Head of caudate nucleus (tissue), 42 donors: ENCODE measurements at regions of chr4 and their contacts with region 1.

Region 1: DNA sequence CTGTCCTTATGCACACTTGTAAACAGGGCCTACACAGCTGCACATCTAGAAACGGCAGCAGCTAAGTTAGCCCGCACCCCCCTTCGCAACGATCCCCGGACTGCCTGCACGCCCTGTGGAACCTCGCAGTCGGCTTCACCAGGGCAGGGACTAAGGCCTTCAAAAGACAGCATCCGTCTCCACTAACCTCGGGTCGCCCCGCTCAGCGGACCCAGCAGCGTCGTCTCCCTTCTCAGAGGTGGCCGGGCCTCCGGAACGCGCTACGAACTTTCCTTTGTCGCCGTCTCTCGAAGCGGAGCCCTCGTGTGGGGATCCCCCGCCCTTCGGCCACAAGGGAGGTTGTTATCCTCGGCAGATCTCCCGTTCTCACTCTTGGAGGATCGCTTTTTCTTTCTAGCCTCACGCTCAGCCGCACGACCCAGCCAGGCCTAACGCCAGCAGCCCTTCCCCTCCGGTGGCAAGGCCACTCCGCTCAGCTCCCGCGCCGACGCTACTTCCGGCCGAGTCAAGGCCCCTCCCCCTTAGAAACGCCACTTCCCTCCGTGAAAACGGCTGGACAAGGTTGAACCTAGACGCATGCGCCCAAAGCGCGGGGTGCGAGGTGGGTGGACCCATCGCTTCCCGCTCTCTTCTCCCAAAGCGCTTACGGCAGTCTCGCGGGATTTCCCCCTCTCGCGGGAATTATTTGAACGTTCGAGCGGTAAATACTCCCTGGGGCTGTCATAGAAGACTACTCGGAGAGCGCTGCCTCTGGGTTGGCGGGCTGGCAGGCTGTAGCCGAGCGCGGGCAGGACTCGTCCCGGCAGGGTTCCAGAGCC is at the starts of genes DCAF16 and NCAPG:
- DNase-seq: peak; percentile 97 to 100 (median 100)

Region 2: GRCh38 chr4:17552427-17552826 is 258.0 kb before region 1 on chr4:
- intact Hi-C with region 1: loop called (anchors 10 kb)
- DNase-seq: peak in 1 of 42 donors; percentile 39

Region 3: DNA sequence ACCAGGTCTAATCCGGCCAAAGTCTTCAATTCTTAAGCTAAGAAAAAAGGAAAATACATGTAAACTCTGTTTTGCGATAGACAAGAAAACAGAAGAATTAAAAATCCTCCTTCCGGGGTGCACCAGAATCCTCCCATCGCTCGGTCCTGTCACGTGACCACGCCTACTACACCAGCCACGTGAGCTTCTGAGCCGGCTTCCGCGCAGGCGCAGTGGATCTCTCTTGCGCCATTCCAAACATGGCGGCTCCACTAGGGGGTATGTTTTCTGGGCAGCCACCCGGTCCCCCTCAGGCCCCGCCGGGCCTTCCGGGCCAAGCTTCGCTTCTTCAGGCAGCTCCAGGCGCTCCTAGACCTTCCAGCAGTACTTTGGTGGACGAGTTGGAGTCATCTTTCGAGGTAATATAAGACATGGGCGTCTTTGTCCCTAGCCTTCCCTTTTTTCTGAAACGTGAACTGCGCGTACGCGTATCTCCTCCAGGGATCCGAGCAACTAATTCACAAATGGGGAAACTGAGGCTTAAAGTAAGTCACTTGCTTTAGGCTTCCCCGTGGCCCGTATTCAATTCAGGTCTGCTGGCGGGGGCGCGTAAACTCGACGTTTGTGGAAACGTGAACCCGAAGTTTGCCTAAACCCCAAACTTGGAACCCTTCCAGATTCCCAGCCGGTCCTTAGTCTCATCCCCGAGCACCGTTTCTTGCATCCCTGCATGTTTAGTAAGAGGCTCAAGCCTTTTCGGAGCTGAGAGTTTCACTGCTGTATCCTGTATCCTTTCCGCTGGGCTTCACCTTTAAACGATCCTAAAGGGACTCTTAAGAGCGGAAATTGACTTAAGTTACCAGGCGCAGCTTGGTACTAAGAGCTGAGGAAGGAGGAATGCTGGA is 195.8 kb before region 1 on chr4 and contains the start of gene MED28:
- intact Hi-C with region 1: loop called (anchors 5 kb)
- DNase-seq: peak; percentile 86 to 99 (median 96)

Region 4: GRCh38 chr4:17854036-17854435 is 43.6 kb after region 1 on chr4:
- intact Hi-C with region 1: no loop called
- DNase-seq: no peak

Region 5: GRCh38 chr4:18021722-18022571 is 211.5 kb after region 1 on chr4 and contains the start of gene LCORL:
- intact Hi-C with region 1: loop called (anchors 2 kb)
- DNase-seq: peak; percentile 87 to 98 (median 95)